ENCODE measurements at regions of chr17 and their contacts with region 1.

Region 1: DNA sequence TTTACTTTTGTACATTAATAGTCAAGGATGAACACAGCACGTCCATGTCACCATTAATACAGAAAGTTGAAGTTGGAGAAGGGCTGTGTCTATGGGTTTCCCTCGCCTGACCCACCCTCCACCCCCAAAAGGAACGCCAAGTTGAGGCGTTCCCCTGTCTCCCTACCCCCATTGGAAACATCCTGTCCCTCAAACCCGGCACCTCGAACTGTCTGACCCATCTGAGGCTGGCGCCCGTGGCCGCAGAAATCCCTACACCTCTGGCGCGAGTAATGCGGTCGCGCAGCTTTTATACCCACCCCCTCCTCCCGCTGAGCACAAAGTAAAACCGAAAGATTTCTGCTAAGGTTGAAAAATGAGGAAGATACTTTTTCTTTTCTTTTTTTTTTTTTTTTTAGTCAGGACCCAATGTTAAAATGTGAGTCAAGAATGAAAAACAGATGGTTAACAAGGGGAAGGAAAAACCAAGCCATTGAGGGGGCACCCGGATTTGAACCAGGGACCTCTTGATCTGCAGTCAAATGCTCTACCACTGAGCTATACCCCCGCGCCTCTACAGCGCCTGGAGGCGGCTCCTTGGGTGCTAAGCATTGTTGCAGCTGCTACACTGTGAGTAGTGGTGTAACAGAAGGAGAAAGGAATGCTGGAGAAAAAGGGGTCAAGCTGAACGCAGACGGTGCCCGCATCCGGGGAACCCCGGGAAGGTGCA is 887 bp upstream of the LASP1 start:
- DNase-seq: peak; percentile 85 to 91 (median 87)
- H3K4me3 ChIP-seq: peak overlapping the region; percentile 66 to 99
- H3K4me3 Mint-ChIP-seq: peak overlapping the region; percentile 93 to 100 (median 96)
- H3K27ac ChIP-seq: peak overlapping the region; percentile 88
- H3K27ac Mint-ChIP-seq: peak overlapping the region; percentile 96 to 100 (median 97)
- H3K4me1 ChIP-seq: peaks cover 45% of the 10 kb centered on the region
- H3K4me1 Mint-ChIP-seq: peaks cover 35 to 63% (median 44%) of the 10 kb centered on the region in 4 donors
- H3K27me3 ChIP-seq: no peaks in the 10 kb centered on the region
- H3K27me3 Mint-ChIP-seq: peaks cover 0 to 7% of the 10 kb centered on the region in 2 donors

Region 2: DNA sequence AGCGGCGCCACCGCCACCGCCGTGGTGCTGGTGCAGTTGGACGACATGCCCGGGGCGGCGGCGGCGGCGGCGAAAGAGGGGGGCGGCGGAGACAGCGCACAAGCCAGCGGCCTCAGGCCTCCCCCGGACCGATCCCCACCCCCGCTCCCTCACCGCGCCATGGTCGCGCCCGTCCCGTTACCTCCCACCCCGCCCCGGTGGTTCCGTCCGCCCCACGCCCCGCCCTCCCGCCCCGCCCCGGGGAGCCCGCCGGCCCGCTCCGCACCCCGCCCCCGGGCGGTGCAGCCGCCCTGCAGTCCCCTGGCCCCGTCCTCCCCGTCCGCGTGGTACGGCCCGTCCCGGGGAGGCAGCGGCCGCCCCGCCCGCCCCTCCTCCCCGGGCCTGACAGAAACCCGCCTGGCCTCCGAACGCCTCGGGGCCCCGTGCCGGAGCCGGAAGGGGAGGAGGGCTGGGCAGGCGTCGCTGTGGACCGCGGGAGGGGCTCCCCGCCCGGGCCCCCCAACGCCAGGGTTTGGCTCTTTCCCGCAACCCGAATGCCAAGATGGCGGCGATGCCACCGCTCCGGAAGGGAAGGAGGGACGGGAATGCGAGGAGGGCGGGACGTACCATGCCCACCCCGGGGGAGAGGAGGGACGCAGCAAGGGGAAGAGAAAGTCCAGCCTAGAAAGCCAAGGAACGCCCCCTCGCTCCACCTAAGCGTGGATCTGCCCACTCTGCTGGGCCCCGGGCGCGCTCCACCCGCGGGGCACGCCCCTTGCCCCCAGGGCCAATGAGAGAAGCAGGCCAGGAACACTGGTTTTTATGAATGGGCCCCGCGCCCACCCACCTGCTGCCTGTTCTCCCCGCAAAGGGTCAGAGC is 69.4 kb before region 1 on chr17 and contains the start of gene PIP4K2B:
- CTCF ChIA-PET with region 1: no interaction called
- POLR2A ChIA-PET with region 1: interaction called, 27 read pairs
- intact Hi-C with region 1: loop called (anchors 1 kb)
- DNase-seq: peak; percentile 81 to 88 (median 83)
- H3K4me3 ChIP-seq: peak within 1 kb of the TSS; percentile 76 to 84
- H3K4me3 Mint-ChIP-seq: peak within 1 kb of the TSS; percentile 91 to 98 (median 94)
- H3K27ac ChIP-seq: peak within 1 kb of the TSS; percentile 76
- H3K27ac Mint-ChIP-seq: peak within 1 kb of the TSS; percentile 89 to 96 (median 93)
- H3K4me1 ChIP-seq: peaks cover 27% of the 10 kb centered on the region
- H3K4me1 Mint-ChIP-seq: peaks cover 30 to 46% (median 36%) of the 10 kb centered on the region in 4 donors
- H3K27me3 ChIP-seq: no peaks in the 10 kb centered on the region
- H3K27me3 Mint-ChIP-seq: no peaks in the 10 kb centered on the region
- total RNA-seq, gene PIP4K2B: 55.9 to 66.3 TPM

Region 3: DNA sequence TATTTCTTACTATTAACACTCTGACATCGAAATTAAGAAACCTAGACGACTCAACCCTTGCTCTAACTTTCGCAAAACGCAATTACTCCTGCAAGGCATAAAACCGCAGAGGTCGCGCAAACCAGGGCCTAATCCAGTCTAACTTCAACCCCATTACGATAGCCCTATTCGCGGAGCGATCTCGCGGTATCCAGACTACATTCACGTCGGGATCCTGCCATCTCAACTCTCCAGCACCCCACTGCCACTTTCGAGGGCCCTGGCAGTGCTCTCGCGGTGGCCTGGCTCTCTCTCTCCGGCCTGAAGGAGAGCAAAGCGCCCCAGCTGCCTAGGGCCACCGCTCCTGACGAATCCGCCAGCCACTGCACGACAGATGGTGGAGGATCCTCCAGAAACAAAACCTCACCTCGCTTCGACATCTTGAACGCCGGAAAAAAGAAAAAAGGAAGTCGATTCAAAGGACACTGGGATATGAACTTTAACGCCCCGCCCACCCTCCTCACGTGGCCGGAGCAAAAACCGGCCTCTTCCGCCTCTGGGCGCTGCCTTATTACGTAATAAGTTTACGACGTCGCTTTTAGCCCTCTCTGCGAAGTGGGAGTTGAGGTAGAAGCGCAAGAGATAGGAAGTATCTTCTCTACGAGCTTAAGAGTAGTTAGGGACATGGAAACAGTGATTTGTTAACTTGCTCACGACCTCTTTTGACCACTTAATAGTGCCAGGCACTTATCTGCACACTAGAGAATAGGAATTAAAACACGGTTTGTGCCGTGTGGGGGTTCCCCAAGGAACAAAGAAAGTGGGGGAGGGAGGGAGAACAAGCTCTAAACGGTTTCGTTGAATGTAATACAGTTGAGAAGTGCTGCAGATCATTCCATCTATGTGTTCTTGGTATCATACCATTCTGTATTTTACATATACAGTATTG is 15.4 kb before region 1 on chr17 and contains the start of gene RPL23:
- CTCF ChIA-PET with region 1: interaction called, 40 read pairs
- POLR2A ChIA-PET with region 1: interaction called, 229 read pairs
- intact Hi-C with region 1: loop called (anchors 1 kb)
- DNase-seq: peak; percentile 90 to 94 (median 92)
- H3K4me3 ChIP-seq: peak within 1 kb of the TSS; percentile 75 to 81
- H3K4me3 Mint-ChIP-seq: peak within 1 kb of the TSS; percentile 88 to 97 (median 95)
- H3K27ac ChIP-seq: peak within 1 kb of the TSS; percentile 87
- H3K27ac Mint-ChIP-seq: peak within 1 kb of the TSS; percentile 97 to 100 (median 99)
- H3K4me1 ChIP-seq: peaks cover 34% of the 10 kb centered on the region
- H3K4me1 Mint-ChIP-seq: peaks cover 30 to 45% (median 37%) of the 10 kb centered on the region in 4 donors
- H3K27me3 ChIP-seq: no peaks in the 10 kb centered on the region
- H3K27me3 Mint-ChIP-seq: no peaks in the 10 kb centered on the region
- total RNA-seq, gene RPL23: 1,511 to 1,572 TPM

Region 4: DNA sequence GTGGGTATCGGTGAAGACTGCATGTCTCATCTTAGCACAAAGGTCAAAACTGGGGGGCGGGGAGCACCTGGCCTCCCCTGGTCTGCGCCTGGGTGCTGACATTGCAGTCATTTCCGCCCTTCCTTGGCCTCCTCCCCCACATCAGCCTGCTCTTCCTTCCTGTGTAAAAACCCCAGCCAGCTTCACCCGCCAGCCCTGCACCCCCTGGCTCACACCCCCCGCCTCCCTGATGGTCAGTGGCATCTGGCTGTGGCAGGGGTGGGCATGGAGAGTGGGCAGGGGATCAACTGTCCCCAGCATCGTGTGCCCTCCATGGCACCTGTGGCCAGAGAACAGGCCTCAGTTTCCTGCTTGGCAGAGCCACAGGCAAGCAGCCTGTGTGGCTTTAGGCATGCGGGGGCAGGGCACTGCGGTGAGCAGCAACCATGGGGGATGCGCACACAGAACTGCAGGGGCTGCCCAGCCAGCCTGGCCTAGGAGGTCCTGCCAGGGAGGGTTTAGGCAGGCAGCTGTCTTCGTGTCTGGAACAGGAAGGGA is 29.9 kb after region 1 on chr17:
- CTCF ChIA-PET with region 1: interaction called, 41 read pairs
- POLR2A ChIA-PET with region 1: interaction called, 133 read pairs
- intact Hi-C with region 1: loop called (anchors 1 kb)
- DNase-seq: peak; percentile 71 to 93 (median 79)
- H3K4me3 ChIP-seq: peak overlapping the region; percentile 36 to 57
- H3K4me3 Mint-ChIP-seq: peak overlapping the region; percentile 66 to 93 (median 88)
- H3K27ac ChIP-seq: peak overlapping the region; percentile 85
- H3K27ac Mint-ChIP-seq: peak overlapping the region; percentile 90 to 98 (median 97)
- H3K4me1 ChIP-seq: peaks cover 88% of the 10 kb centered on the region
- H3K4me1 Mint-ChIP-seq: peaks cover 40 to 79% (median 62%) of the 10 kb centered on the region in 4 donors
- H3K27me3 ChIP-seq: no peaks in the 10 kb centered on the region
- H3K27me3 Mint-ChIP-seq: no peaks in the 10 kb centered on the region

Region 5: GRCh38 chr17:38967290-38967738 is 98.3 kb after region 1 on chr17 and contains the start of gene FBXO47:
- CTCF ChIA-PET with region 1: interaction called, 3 read pairs
- POLR2A ChIA-PET with region 1: interaction called, 14 read pairs
- intact Hi-C with region 1: loop called (anchors 5 kb)
- DNase-seq: peak; percentile 69 to 89 (median 77)
- H3K4me3 ChIP-seq: peak within 1 kb of the TSS in 1 of 2 donors; percentile 10
- H3K4me3 Mint-ChIP-seq: peak within 1 kb of the TSS; percentile 70 to 87 (median 81)
- H3K27ac ChIP-seq: no peak within 1 kb of the TSS
- H3K27ac Mint-ChIP-seq: peak within 1 kb of the TSS; percentile 74 to 90 (median 86)
- H3K4me1 ChIP-seq: peaks cover 7% of the 10 kb centered on the region
- H3K4me1 Mint-ChIP-seq: peaks cover 7 to 16% (median 12%) of the 10 kb centered on the region in 4 donors
- H3K27me3 ChIP-seq: no peaks in the 10 kb centered on the region
- H3K27me3 Mint-ChIP-seq: no peaks in the 10 kb centered on the region
- total RNA-seq, gene FBXO47: not detected

Region 6: GRCh38 chr17:39199820-39200069 is 330.8 kb after region 1 on chr17:
- CTCF ChIA-PET with region 1: interaction called, 3 read pairs
- POLR2A ChIA-PET with region 1: interaction called, 20 read pairs
- intact Hi-C with region 1: no loop called
- DNase-seq: peak in 4 of 5 donors; percentile 92 to 94 (median 92)
- H3K4me3 ChIP-seq: peak overlapping the region; percentile 77 to 93
- H3K4me3 Mint-ChIP-seq: peak overlapping the region; percentile 86 to 98 (median 96)
- H3K27ac ChIP-seq: peak overlapping the region; percentile 98
- H3K27ac Mint-ChIP-seq: peak overlapping the region; percentile 96 to 100 (median 100)
- H3K4me1 ChIP-seq: peaks cover 58% of the 10 kb centered on the region
- H3K4me1 Mint-ChIP-seq: peaks cover 37 to 73% (median 58%) of the 10 kb centered on the region in 4 donors
- H3K27me3 ChIP-seq: no peaks in the 10 kb centered on the region
- H3K27me3 Mint-ChIP-seq: no peaks in the 10 kb centered on the region